Activated B cell treated with CpG ODN at 0.5 μM for 24 hours (primary cell): ENCODE measurements at regions of chr18 and their contacts with region 1.

Region 1: GRCh38 chr18:53843113-53843760 is 381.2 kb downstream of the MBD2 start:
- DNase-seq: no peak
- ATAC-seq: no peak
- H3K4me3 Mint-ChIP-seq: no peak overlapping the region
- H3K27ac Mint-ChIP-seq: no peak overlapping the region
- H3K4me1 Mint-ChIP-seq: no peaks in the 10 kb centered on the region
- H3K27me3 Mint-ChIP-seq: no peaks in the 10 kb centered on the region
- CTCF ChIP-seq: no peak

Region 2: DNA sequence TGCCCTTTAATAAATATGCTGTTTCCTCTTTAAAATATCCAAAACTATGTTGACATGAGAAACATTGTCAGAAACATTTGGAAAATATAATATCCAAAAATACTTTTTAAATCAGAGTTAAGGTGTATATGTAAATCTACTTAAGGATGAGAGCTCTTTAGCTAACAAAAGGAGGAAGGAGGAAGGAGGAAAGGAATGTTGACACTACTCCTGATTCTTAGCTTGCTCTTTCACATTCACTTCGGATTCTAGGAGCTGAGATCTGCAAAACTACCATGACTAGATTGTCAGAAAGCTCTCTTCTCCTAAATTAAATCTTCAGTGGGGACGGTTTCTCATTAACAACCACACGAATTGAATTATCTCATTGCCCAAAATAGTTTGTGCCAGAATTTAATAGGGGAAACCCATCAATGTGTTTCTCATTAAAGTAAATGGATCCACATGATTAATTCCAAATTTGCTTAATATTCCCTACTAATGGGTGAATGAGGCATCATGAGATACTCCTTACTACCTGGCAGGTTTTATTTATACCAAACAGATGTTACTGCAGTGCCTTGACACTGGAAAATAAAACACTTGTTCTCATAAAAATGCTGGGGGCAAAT is 127.9 kb before region 1 on chr18:
- CTCF ChIA-PET with region 1: no interaction called
- POLR2A ChIA-PET with region 1: no interaction called
- intact Hi-C with region 1: no loop called
- DNase-seq: no peak
- ATAC-seq: no peak
- H3K4me3 Mint-ChIP-seq: no peak overlapping the region
- H3K27ac Mint-ChIP-seq: no peak overlapping the region
- H3K4me1 Mint-ChIP-seq: no peaks in the 10 kb centered on the region
- H3K27me3 Mint-ChIP-seq: no peaks in the 10 kb centered on the region
- CTCF ChIP-seq: no peak

Region 3: DNA sequence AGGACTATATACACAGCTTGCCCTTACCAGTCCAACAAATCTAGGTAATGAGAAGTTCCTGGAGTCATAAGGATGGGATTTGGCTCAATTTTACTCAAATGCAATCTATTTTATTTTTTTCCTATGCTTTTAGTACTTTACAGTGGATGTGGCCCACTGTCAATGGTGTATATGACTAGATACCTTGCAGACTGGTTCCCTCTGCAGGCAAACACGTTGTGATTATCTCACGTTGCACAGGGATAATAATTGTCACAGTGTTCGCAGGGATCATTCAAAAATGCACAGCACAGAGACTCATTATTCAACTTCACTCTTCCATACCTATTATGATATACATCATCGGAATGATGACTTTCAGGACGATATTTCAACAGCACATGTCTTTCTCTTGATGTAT is 21.5 kb after region 1 on chr18:
- CTCF ChIA-PET with region 1: no interaction called
- POLR2A ChIA-PET with region 1: no interaction called
- intact Hi-C with region 1: no loop called
- DNase-seq: no peak
- ATAC-seq: no peak
- H3K4me3 Mint-ChIP-seq: no peak overlapping the region
- H3K27ac Mint-ChIP-seq: no peak overlapping the region
- H3K4me1 Mint-ChIP-seq: no peaks in the 10 kb centered on the region
- H3K27me3 Mint-ChIP-seq: no peaks in the 10 kb centered on the region
- CTCF ChIP-seq: no peak

Region 4: GRCh38 chr18:53909668-53910067 is 66.4 kb after region 1 on chr18:
- CTCF ChIA-PET with region 1: no interaction called
- POLR2A ChIA-PET with region 1: no interaction called
- intact Hi-C with region 1: loop called (anchors 10 kb)
- DNase-seq: no peak
- ATAC-seq: no peak
- H3K4me3 Mint-ChIP-seq: no peak overlapping the region
- H3K27ac Mint-ChIP-seq: no peak overlapping the region
- H3K4me1 Mint-ChIP-seq: no peaks in the 10 kb centered on the region
- H3K27me3 Mint-ChIP-seq: no peaks in the 10 kb centered on the region
- CTCF ChIP-seq: no peak